ENCODE measurements at regions of chr7 and their contacts with region 1.

Region 1: DNA sequence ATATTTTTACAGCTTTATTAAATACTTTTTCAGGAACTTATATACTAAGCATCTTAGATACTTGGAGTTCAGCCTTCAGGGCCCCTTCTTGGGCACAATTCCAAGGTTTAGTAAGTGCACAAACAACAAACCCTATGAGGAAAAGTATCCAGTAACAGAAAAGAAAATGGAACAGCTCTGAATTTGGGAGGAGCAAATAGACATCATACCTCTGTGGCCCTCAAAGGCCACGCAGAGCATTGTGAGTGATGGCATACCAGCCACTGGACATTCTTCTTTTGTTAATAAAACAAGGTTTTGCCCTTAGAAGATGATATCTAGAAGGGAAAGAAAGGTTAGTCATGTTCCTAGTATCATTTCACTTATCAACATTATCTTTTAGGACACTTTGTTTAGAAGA is 46.0 kb downstream of the ST7 start:
- DNase-seq: no peak
- ATAC-seq: no peak
- H3K4me3 ChIP-seq: no peak overlapping the region
- H3K27ac ChIP-seq: no peak overlapping the region
- H3K4me1 ChIP-seq: peaks cover 0 to 11% (median 7%) of the 10 kb centered on the region in 9 donors
- H3K27me3 ChIP-seq: no peaks in the 10 kb centered on the region
- CTCF ChIP-seq: no peak

Region 2: GRCh38 chr7:117061751-117062150 is 62.4 kb after region 1 on chr7:
- intact Hi-C with region 1: loop called in 1 of 10 experiments (anchors 5 kb)
- DNase-seq: no peak
- ATAC-seq: no peak
- H3K4me3 ChIP-seq: no peak overlapping the region
- H3K27ac ChIP-seq: no peak overlapping the region
- H3K4me1 ChIP-seq: peaks cover 0 to 8% (median 0%) of the 10 kb centered on the region in 9 donors
- H3K27me3 ChIP-seq: no peaks in the 10 kb centered on the region
- CTCF ChIP-seq: no peak